ENCODE measurements at regions of chr4 and their contacts with region 1.

Region 1: DNA sequence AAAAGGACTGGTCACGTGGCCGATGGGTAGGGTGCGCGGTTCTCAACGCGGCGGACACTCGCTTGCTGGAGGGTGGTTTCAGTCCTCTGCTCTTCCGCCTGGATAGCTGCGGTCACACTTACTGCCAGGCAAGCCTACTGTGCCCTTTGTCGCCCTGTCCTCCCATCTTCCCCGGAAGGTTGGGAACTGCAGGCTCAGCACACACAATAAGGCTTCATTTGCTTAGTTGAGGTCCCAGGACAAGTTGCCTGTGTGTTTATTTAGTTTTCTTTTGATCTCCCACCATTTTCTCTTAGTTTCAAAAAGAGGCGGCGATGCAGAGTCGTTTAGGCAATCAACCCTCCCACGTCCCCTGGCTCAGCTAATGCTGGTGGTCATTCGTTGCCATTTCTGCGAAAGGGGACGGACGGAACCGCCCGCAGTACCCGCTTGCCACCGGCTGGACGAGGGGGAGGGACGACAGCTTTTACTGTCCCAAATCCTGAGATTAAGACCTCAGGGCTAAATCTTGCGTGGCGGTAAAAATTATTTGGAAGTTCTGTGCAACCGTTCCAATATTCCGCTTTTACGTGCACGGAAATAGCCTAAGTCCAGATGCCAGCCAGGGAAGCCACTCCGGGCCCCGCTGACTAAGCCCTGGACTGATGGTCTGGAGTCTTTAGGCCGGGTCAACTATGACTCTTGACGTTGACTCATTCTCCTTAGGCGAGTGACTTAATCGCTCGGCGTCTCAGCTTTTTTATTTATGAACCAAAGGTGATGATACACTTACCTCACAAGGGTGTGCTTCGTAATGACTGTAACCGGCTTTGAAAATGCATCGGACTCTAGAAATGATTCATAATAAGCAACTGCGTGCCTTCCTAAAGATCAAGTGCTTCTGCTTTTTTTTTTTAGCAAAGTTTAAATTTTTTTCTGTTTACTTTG is 671 bp upstream of the EIF4E start:
- DNase-seq: peak; percentile 68
- ATAC-seq: peak; percentile 69

Region 2: GRCh38 chr4:98909646-98910401 is 19.8 kb before region 1 on chr4:
- intact Hi-C with region 1: loop called (anchors 1 kb)
- DNase-seq: no peak
- ATAC-seq: no peak

Region 3: GRCh38 chr4:98939892-98940298 is 10.3 kb after region 1 on chr4:
- intact Hi-C with region 1: no loop called
- DNase-seq: no peak
- ATAC-seq: peak; percentile 60

Measured in sciatic nerve (tissue), 2 donors.